ENCODE measurements at regions of chr17 and their contacts with region 1.

Region 1: GRCh38 chr17:63425482-63425881 is 20.6 kb downstream of the CYB561 start:
- DNase-seq: peak; percentile 83
- ATAC-seq: peak; percentile 62
- H3K4me3 Mint-ChIP-seq: no peak overlapping the region
- H3K27ac Mint-ChIP-seq: no peak overlapping the region
- H3K4me1 Mint-ChIP-seq: peaks cover 35% of the 10 kb centered on the region
- H3K27me3 Mint-ChIP-seq: no peaks in the 10 kb centered on the region
- CTCF ChIP-seq: peak; percentile 66

Region 2: DNA sequence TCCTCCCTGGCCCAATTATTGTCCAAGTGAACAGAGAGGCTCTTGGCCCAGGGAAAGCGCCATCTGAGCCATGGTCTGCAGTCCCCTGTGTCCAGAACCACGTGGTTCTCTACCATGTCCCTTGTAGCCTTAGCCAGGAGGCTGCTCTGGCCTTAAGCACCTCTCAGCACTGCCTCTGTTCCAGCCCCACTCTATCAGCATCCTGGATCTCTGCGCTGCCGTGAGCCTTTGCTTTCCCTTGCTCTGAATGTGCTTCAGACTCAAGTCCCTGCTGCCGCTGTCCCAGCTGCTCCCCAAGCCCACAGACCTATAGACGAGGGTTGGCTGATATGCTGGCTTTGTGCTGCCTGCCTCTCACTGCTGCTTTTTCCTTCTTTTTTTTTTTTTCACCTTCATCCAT is 13.2 kb before region 1 on chr17:
- CTCF ChIA-PET with region 1: interaction called, 56 read pairs
- POLR2A ChIA-PET with region 1: no interaction called
- DNase-seq: no peak
- ATAC-seq: no peak
- H3K4me3 Mint-ChIP-seq: no peak overlapping the region
- H3K27ac Mint-ChIP-seq: no peak overlapping the region
- H3K4me1 Mint-ChIP-seq: no peaks in the 10 kb centered on the region
- H3K27me3 Mint-ChIP-seq: no peaks in the 10 kb centered on the region
- CTCF ChIP-seq: no peak

Region 3: DNA sequence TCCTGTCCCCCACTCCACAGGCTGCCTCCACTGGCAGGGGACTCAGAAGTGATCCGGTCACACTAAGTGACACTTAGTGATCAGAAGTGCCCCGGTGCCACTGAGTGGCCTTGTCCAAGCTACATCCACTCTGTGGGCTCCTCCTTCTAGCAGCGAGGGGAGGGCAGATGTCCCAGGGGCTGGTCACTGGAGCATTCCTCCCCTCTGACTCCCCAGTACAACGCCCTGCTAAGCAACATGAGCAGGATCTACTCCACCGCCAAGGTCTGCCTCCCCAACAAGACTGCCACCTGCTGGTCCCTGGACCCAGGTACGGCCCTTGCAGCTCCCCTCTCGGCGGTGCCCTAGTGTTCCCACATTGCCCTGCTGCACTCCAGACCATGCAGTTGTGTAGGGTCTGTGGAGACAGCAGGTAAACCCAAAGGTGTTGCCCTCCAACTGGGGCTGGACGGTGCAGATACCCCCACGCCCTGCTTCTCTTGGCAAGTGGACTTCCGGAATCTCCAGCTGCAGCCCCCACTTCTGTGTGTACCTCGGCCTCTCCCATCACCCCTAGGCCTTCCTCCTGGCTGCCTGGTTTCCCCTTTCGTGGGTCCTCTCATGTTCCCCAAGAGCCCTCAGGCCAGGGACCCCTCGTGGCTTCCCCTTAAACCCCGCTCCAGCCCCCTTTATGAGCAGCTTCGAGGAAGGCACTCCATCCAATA is 53.5 kb after region 1 on chr17:
- CTCF ChIA-PET with region 1: interaction called, 167 read pairs
- POLR2A ChIA-PET with region 1: interaction called, 7 read pairs
- DNase-seq: peak; percentile 92
- ATAC-seq: peak; percentile 75
- H3K4me3 Mint-ChIP-seq: peak overlapping the region; percentile 14; the same call in 1 of the 2 replicates
- H3K27ac Mint-ChIP-seq: no peak overlapping the region
- H3K4me1 Mint-ChIP-seq: peaks cover 32% of the 10 kb centered on the region
- H3K27me3 Mint-ChIP-seq: peaks cover 28% of the 10 kb centered on the region
- CTCF ChIP-seq: peak; percentile 52; the same call in 1 of the 2 replicates

Region 4: GRCh38 chr17:63542942-63543821 is 117.7 kb after region 1 on chr17:
- CTCF ChIA-PET with region 1: interaction called, 10 read pairs
- POLR2A ChIA-PET with region 1: no interaction called
- DNase-seq: peak; percentile 12
- ATAC-seq: peak; percentile 22
- H3K4me3 Mint-ChIP-seq: no peak overlapping the region
- H3K27ac Mint-ChIP-seq: no peak overlapping the region
- H3K4me1 Mint-ChIP-seq: peaks cover 21% of the 10 kb centered on the region
- H3K27me3 Mint-ChIP-seq: peaks cover 18% of the 10 kb centered on the region
- CTCF ChIP-seq: no peak

Region 5: DNA sequence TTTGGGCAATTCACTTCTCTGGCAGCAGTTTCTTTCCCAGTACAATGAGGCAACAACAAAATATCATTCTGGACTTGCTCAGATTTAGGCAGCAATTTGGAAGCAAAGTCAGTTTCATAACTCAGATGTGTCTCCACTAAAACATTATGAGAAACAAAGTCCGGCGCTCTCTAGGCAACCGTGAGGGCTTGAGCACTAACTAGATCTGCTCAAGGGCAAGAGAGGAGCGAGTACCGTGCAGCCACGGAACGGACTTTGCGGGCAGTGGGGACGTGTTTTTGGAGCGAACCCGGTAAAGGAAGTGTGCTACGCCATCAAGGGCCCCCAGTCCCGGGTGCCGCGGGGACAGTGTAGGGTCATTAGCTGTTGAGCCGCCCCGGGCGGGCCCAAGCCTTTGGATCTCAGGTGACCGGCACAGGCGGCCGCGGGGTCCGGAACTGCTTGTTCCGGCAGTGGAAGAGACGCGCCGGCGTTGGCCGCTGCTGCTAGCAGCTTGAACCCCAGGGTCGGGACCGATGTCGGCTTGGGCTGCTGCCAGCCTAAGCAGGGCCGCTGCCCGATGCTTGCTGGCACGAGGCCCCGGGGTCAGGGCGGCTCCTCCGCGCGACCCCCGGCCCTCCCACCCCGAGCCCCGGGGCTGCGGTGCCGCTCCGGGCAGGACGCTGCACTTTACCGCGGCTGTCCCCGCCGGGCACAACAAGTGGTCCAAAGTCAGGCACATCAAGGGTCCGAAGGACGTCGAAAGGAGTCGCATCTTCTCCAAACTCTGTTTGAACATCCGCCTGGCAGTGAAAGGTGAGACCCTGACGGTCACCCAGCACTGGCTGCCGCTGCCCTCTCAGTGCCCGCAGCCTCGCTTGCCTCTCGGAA is 175.3 kb after region 1 on chr17 and contains the start of gene TACO1:
- CTCF ChIA-PET with region 1: interaction called, 12 read pairs
- POLR2A ChIA-PET with region 1: no interaction called
- DNase-seq: peak; percentile 83
- ATAC-seq: peak; percentile 96
- H3K4me3 Mint-ChIP-seq: peak within 1 kb of the TSS; percentile 84
- H3K27ac Mint-ChIP-seq: peak within 1 kb of the TSS; percentile 89
- H3K4me1 Mint-ChIP-seq: peaks cover 9% of the 10 kb centered on the region
- H3K27me3 Mint-ChIP-seq: no peaks in the 10 kb centered on the region
- CTCF ChIP-seq: no peak
- total RNA-seq, gene TACO1: 22.8 to 26.9 TPM (median 24.1 TPM) in 3 replicates

Region 6: GRCh38 chr17:63675607-63676413 is 250.3 kb after region 1 on chr17:
- CTCF ChIA-PET with region 1: interaction called, 34 read pairs
- POLR2A ChIA-PET with region 1: interaction called, 3 read pairs
- DNase-seq: no peak
- ATAC-seq: peak; percentile 38
- H3K4me3 Mint-ChIP-seq: no peak overlapping the region
- H3K27ac Mint-ChIP-seq: peak overlapping the region; percentile 73
- H3K4me1 Mint-ChIP-seq: peaks cover 43% of the 10 kb centered on the region
- H3K27me3 Mint-ChIP-seq: no peaks in the 10 kb centered on the region
- CTCF ChIP-seq: no peak

Region 7: DNA sequence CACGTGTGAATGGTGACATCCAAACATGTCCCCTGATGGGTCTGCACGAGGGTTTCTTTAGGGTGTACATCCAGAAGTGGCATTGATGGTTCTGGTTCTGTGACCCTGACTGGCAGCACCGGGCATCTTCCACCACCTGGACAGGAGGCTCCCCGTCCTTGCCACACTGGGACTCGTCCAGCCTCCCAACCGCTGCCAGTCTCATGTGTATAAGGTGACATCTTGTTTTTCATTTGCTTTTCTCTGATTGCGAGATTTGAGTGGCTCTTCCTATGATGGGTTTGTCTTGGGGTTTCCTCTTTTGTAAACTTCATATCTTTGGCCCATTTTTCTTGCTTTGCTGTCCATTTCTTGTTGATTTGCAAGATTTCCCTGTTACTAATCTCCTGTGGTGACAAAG is 283.6 kb after region 1 on chr17:
- CTCF ChIA-PET with region 1: interaction called, 15 read pairs
- POLR2A ChIA-PET with region 1: interaction called, 4 read pairs
- DNase-seq: no peak
- ATAC-seq: no peak
- H3K4me3 Mint-ChIP-seq: no peak overlapping the region
- H3K27ac Mint-ChIP-seq: no peak overlapping the region
- H3K4me1 Mint-ChIP-seq: no peaks in the 10 kb centered on the region
- H3K27me3 Mint-ChIP-seq: no peaks in the 10 kb centered on the region
- CTCF ChIP-seq: no peak

Region 8: DNA sequence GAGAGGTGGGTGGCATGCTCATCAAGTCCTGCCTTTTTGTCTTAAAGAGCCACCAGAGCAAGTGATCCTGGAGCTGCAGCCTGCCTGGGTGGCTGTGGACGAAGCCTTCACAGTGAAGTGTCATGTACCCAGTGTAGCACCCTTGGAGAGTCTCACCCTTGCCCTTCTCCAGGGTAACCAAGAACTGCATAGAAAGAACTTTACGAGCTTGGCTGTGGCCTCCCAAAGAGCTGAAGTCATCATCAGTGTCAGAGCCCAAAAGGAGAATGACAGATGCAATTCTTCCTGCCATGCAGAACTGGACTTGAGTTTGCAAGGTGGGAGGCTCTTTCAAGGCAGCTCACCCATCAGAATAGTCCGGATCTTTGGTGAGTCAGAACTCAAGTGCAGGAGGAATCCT is 433.8 kb after region 1 on chr17:
- CTCF ChIA-PET with region 1: no interaction called
- POLR2A ChIA-PET with region 1: no interaction called
- DNase-seq: no peak
- ATAC-seq: no peak
- H3K4me3 Mint-ChIP-seq: no peak overlapping the region
- H3K27ac Mint-ChIP-seq: no peak overlapping the region
- H3K4me1 Mint-ChIP-seq: no peaks in the 10 kb centered on the region
- H3K27me3 Mint-ChIP-seq: peaks cover 52% of the 10 kb centered on the region
- CTCF ChIP-seq: no peak

Measured in WTC11 (cell line).